PC-3 (cell line): ENCODE measurements at regions of chr3 and their contacts with region 1.

Region 1: DNA sequence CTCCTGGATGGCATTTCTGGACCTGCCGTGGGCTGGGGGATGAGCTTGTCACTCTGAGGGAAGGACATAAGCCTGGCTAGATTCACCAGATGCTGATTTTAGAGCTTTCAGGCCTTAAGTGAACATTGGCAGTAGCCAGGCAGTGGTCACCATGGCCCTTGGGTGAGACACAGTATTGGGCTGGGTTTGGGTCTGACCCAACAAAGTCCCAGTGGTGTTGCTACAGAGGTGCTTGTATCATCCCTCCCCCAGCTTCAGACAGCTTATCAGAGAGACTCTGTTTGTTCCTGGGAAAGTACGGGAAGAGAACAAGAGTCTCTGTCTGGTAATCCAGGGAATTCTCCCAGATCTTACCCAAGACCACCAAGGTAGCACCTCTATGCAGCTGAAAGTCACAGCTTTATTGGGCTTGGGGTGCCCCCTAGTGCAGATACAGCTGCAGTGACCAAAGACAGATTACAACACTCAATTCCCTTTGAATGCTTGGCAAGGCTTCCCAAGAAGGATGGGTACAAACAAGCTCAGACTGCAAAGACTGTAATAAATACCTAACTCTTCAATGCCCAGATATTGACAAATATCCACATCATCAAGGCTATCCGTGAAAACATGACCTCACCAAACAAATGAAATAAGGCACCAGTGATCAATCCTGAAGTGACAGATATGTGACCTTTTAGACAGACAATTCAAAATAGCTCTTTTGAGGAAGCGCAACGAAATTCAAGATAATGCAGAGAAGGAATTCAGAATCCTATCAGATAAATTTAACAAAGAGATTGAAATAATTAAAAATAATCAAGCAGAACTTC is 9.9 kb upstream of the RUVBL1 start:
- DNase-seq: peak; percentile 51
- ATAC-seq: peak; percentile 73; the same call in 1 of the 2 replicates
- H3K4me3 ChIP-seq: no peak overlapping the region
- H3K27ac ChIP-seq: no peak overlapping the region
- H3K4me1 ChIP-seq: no peaks in the 10 kb centered on the region
- H3K27me3 ChIP-seq: no peaks in the 10 kb centered on the region
- CTCF ChIP-seq: peak; percentile 75

Region 2: GRCh38 chr3:127574880-127575878 is 558.3 kb before region 1 on chr3:
- CTCF ChIA-PET with region 1: interaction called, 10 read pairs
- POLR2A ChIA-PET with region 1: no interaction called
- intact Hi-C with region 1: no loop called
- DNase-seq: peak; percentile 89
- ATAC-seq: peak; percentile 94
- H3K4me3 ChIP-seq: no peak overlapping the region
- H3K27ac ChIP-seq: no peak overlapping the region
- H3K4me1 ChIP-seq: no peaks in the 10 kb centered on the region
- H3K27me3 ChIP-seq: no peaks in the 10 kb centered on the region
- CTCF ChIP-seq: peak; percentile 85

Region 3: GRCh38 chr3:128011140-128011539 is 122.3 kb before region 1 on chr3:
- CTCF ChIA-PET with region 1: no interaction called
- POLR2A ChIA-PET with region 1: no interaction called
- intact Hi-C with region 1: loop called (anchors 10 kb)
- DNase-seq: peak; percentile 70
- ATAC-seq: peak; percentile 98
- H3K4me3 ChIP-seq: peak overlapping the region; percentile 9; the same call in 1 of the 2 replicates
- H3K27ac ChIP-seq: no peak overlapping the region
- H3K4me1 ChIP-seq: peaks cover 4% of the 10 kb centered on the region
- H3K27me3 ChIP-seq: no peaks in the 10 kb centered on the region
- CTCF ChIP-seq: peak; percentile 75

Region 4: GRCh38 chr3:128075516-128076482 is 57.7 kb before region 1 on chr3:
- CTCF ChIA-PET with region 1: no interaction called
- POLR2A ChIA-PET with region 1: no interaction called
- intact Hi-C with region 1: loop called (anchors 10 kb)
- DNase-seq: no peak
- ATAC-seq: no peak
- H3K4me3 ChIP-seq: no peak overlapping the region
- H3K27ac ChIP-seq: no peak overlapping the region
- H3K4me1 ChIP-seq: peaks cover 24% of the 10 kb centered on the region
- H3K27me3 ChIP-seq: no peaks in the 10 kb centered on the region
- CTCF ChIP-seq: peak; percentile 14; the same call in 1 of the 2 replicates

Region 5: GRCh38 chr3:128095222-128095703 is 38.2 kb before region 1 on chr3:
- CTCF ChIA-PET with region 1: interaction called, 10 read pairs
- POLR2A ChIA-PET with region 1: no interaction called
- intact Hi-C with region 1: loop called (anchors 1 kb)
- DNase-seq: peak; percentile 70
- ATAC-seq: peak; percentile 97
- H3K4me3 ChIP-seq: no peak overlapping the region
- H3K27ac ChIP-seq: no peak overlapping the region
- H3K4me1 ChIP-seq: peaks cover 6% of the 10 kb centered on the region
- H3K27me3 ChIP-seq: no peaks in the 10 kb centered on the region
- CTCF ChIP-seq: peak; percentile 77

Region 6: GRCh38 chr3:129160891-129161859 is 1027.7 kb after region 1 on chr3 and contains the start of gene ISY1:
- CTCF ChIA-PET with region 1: no interaction called
- POLR2A ChIA-PET with region 1: no interaction called
- intact Hi-C with region 1: no loop called
- DNase-seq: peak; percentile 90
- ATAC-seq: peak; percentile 75
- H3K4me3 ChIP-seq: peak within 1 kb of the TSS; percentile 97
- H3K27ac ChIP-seq: peak within 1 kb of the TSS; percentile 97
- H3K4me1 ChIP-seq: peaks cover 16% of the 10 kb centered on the region; the same call in 1 of the 2 replicates
- H3K27me3 ChIP-seq: no peaks in the 10 kb centered on the region
- CTCF ChIP-seq: peak; percentile 72
- total RNA-seq, gene ISY1: 17.1 and 18.1 TPM in 2 replicates